ENCODE measurements at regions of chrX and their contacts with region 1.

Region 1: DNA sequence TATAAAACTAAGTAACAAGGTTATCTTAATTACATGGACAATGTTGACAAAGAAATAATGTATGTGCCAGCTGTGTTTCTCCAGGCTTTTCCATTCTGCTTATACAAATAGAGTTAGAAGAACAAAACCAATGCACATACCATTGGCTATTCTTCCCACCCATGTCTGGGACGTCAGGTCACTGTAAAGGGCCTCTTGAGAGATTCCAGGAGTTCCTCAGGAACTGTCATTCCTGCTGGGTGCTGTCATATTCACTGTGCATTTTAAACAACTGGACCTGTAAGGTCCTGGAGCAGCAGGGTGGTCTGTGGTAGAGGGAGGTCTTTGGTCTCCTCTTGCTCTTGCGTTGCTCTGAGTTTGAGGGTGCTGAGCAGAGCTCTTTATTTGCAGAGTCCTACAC is 74.6 kb upstream of the AP1S2 start:
- DNase-seq: no peak
- H3K4me3 ChIP-seq: no peak overlapping the region
- H3K27ac ChIP-seq: no peak overlapping the region
- H3K4me1 ChIP-seq: no peaks in the 10 kb centered on the region
- H3K27me3 ChIP-seq: peaks cover 0 to 73% of the 10 kb centered on the region in 2 donors
- CTCF ChIP-seq: no peak
- POLR2A ChIP-seq: no peak

Region 2: DNA sequence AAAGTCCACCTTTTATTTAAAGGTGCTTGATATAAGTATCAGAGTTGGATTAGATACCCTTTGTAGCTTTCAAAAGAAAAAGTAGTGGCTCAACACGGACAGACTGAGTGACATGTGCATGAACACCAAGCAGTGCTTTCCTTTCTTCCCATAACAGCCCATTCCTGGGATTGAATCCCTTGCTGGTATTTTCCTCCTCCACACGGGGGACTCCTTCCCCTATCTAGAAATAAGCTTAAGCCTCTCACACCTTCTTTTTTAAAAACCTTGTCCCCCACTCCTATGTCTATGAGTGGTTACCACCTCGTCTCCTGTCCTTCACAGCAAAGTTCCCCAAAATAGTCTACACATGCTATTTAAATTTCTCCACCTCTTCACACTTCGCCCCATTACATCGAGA is 79.6 kb before region 1 on chrX:
- intact Hi-C with region 1: no loop called
- DNase-seq: no peak
- H3K4me3 ChIP-seq: no peak overlapping the region
- H3K27ac ChIP-seq: no peak overlapping the region
- H3K4me1 ChIP-seq: no peaks in the 10 kb centered on the region
- H3K27me3 ChIP-seq: peaks cover 0 to 6% of the 10 kb centered on the region in 2 donors
- CTCF ChIP-seq: no peak
- POLR2A ChIP-seq: no peak

Region 3: GRCh38 chrX:15988661-15989603 is 59.7 kb after region 1 on chrX:
- intact Hi-C with region 1: loop called (anchors 2 kb)
- DNase-seq: no peak
- H3K4me3 ChIP-seq: no peak overlapping the region
- H3K27ac ChIP-seq: peak overlapping the region in 1 of 2 donors; percentile 19
- H3K4me1 ChIP-seq: no peaks in the 10 kb centered on the region
- H3K27me3 ChIP-seq: peaks cover 0 to 22% of the 10 kb centered on the region in 2 donors
- CTCF ChIP-seq: no peak
- POLR2A ChIP-seq: no peak

Region 4: DNA sequence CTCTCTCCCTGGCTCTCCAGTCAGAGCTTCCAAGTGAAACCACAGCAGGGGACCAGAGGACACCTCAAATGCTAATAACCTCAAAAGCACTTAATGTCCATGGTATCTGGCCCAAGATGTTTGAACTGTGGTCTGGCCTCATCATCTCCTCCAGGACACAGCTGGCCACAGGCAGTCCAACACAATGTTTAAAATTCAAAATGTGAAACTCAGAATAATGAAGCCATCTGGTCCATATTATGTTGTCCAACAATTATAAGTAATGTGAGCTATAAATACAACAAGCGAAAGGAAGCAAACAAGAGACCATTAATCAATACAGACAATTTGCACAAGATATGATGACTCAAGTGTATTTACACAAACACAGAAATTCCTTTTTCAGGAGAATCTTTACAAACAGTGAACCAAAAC is 630.0 kb after region 1 on chrX:
- intact Hi-C with region 1: no loop called
- DNase-seq: no peak
- H3K4me3 ChIP-seq: no peak overlapping the region
- H3K27ac ChIP-seq: no peak overlapping the region
- H3K4me1 ChIP-seq: no peaks in the 10 kb centered on the region
- H3K27me3 ChIP-seq: peaks cover 0 to 6% of the 10 kb centered on the region in 2 donors
- CTCF ChIP-seq: no peak
- POLR2A ChIP-seq: no peak

Measured in breast epithelium (tissue), 4 donors.